Activated CD4-positive, alpha-beta T cell treated with anti-CD3 and anti-CD28 coated beads for 36 hours (primary cell): ENCODE measurements at regions of chr14 and their contacts with region 1.

Region 1: DNA sequence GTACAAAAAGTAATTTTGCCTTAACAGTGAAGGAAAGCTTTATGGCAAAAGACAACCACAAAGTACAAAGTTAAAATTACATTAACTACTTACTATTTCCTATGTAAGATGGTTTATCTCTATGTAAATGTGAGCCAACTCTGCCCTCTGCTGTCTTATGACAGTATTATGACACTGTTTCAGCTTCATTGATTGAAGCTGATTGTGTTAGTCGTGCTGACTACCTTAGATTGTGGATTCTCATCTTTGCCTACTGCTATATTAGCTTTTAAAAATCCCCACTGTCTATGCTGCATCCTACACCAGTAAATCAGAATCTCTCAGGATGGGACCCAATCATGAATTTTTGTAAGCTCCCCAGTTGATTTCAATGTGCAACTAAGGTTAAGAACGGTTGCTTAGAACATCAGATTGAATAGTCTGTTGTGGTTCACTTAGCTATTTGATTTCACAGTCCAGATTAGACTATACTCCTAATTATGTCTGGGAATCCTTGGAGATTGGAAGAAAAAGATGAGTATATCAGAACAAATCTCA is 12.2 kb upstream of the SPTB start:
- DNase-seq: peak; percentile 25
- ATAC-seq: peak; percentile 92
- H3K4me3 Mint-ChIP-seq: no peak overlapping the region
- H3K27ac Mint-ChIP-seq: no peak overlapping the region
- H3K4me1 Mint-ChIP-seq: no peaks in the 10 kb centered on the region
- H3K27me3 Mint-ChIP-seq: peaks cover 9% of the 10 kb centered on the region

Region 2: GRCh38 chr14:64671591-64671990 is 220.3 kb before region 1 on chr14:
- CTCF ChIA-PET with region 1: interaction called, 30 read pairs
- POLR2A ChIA-PET with region 1: no interaction called
- intact Hi-C with region 1: loop called (anchors 5 kb)
- DNase-seq: no peak
- ATAC-seq: peak; percentile 74
- H3K4me3 Mint-ChIP-seq: no peak overlapping the region
- H3K27ac Mint-ChIP-seq: no peak overlapping the region
- H3K4me1 Mint-ChIP-seq: peaks cover 17% of the 10 kb centered on the region
- H3K27me3 Mint-ChIP-seq: no peaks in the 10 kb centered on the region

Region 3: GRCh38 chr14:64800000-64800399 is 91.9 kb before region 1 on chr14:
- CTCF ChIA-PET with region 1: interaction called, 32 read pairs
- POLR2A ChIA-PET with region 1: no interaction called
- intact Hi-C with region 1: no loop called
- DNase-seq: peak; percentile 37
- ATAC-seq: no peak
- H3K4me3 Mint-ChIP-seq: no peak overlapping the region
- H3K27ac Mint-ChIP-seq: no peak overlapping the region
- H3K4me1 Mint-ChIP-seq: no peaks in the 10 kb centered on the region
- H3K27me3 Mint-ChIP-seq: no peaks in the 10 kb centered on the region

Region 4: DNA sequence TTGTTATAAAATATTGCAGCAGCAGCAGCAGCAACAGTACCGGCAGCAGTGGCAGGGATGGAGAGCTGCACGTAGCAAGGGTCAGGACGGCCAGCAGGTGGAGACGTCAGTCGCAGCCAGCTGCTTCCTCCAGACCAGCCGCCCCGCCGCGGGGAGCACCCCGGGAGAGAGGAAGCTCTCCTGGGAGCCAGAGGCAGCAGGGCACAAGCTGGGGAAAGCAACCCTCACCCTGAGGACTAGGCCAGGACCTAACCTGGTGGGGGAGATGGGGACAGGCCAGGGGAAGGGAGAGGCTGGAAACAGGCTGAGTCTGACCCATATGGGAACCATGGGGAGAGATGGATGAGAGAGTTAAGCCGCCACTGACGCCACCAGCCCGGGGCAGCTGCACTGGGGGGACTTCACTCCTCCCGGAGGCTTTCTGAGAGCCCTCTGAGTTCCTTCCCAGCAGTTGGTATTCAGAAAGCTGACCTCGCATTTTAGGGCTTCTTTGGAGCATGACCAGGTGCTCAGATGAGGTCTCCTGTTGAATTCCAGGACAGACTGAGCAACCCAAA is 68.5 kb before region 1 on chr14:
- CTCF ChIA-PET with region 1: interaction called, 154 read pairs
- POLR2A ChIA-PET with region 1: no interaction called
- intact Hi-C with region 1: loop called (anchors 5 kb)
- DNase-seq: peak; percentile 84
- ATAC-seq: peak; percentile 98
- H3K4me3 Mint-ChIP-seq: no peak overlapping the region
- H3K27ac Mint-ChIP-seq: no peak overlapping the region
- H3K4me1 Mint-ChIP-seq: no peaks in the 10 kb centered on the region
- H3K27me3 Mint-ChIP-seq: peaks cover 8% of the 10 kb centered on the region

Region 5: DNA sequence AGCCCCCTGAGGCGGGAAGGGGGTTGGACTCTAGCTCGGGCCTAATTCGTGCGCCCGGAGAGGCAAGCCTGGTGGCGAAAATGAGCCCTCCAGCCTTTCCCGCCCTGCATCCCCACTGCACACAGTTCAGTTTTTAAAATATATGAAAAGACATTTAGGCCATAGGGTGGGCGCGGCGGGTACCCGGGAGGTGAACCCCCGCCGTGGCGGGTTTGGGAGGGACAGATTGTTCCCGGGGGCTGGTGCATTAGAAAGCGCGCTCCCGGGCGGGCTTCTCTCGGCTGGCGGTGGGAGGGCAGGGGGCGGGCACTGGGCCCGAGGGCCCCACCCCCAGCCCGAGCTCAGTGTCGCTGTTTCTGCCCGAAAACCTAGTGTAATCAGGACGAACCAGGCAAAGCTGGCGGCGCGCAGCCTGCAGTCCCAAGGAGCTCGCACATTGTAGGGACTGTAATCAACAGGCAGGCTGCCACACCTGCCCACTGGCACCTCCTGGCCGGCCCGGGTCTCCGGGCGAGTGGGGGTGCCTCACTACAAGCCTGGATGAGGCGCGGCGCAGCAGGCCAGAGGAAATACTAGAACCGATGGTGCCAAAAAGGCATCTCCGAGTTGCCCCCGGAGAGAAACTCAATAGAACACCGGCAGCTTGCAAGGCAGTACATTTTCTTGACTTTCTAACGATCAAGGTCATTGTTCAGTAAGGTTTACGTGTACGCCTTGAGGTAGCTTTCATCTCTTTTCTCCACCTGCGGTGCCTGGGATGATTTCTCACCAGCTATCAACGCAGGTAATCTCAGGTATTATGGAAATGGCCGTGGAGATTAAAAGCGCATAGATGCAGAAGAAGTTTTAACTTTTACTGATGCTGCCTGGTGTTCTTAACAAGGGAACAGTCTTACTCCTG is 11.4 kb before region 1 on chr14:
- CTCF ChIA-PET with region 1: interaction called, 63 read pairs
- POLR2A ChIA-PET with region 1: no interaction called
- intact Hi-C with region 1: no loop called
- DNase-seq: peak; percentile 79
- ATAC-seq: peak; percentile 89
- H3K4me3 Mint-ChIP-seq: peak overlapping the region; percentile 72
- H3K27ac Mint-ChIP-seq: no peak overlapping the region
- H3K4me1 Mint-ChIP-seq: peaks cover 10% of the 10 kb centered on the region
- H3K27me3 Mint-ChIP-seq: peaks cover 25% of the 10 kb centered on the region

Region 6: DNA sequence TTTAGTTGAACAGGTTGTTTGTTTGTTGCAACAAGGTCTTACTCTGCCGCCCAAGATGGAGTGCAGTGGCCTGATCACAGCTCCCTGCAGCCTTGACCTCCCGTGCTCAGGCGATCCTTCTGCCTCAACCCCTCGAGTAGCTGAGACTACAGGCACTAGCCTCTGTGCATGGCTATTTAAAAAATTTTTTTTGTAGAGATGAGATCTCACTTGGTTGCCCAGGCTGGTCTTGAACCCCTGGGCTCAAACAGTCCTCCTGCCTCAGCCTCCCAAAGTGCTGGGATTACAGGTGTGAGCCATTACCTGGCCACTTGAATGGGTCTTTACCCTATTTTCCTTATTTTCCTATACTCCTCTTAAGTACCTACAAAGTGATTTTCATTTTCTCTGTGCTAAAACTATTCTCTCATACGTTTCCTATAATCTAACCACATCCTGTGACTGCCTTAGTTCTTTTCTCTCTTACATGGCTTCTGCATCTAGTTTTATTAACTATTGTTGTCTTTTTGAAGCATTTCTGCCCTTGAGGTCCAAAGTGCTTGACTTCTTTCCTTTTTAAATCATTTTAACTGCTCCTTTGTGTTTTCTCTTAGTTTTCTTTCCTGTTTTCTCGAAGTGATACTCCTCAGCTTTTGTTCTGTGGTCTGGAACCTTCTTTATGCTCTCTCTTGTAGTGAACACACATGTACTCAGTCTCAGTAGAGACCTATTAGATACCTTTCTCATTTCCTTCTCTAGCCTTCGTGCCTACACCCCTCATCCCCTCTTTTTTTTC is 36.5 kb after region 1 on chr14:
- CTCF ChIA-PET with region 1: interaction called, 13 read pairs
- POLR2A ChIA-PET with region 1: no interaction called
- intact Hi-C with region 1: no loop called
- DNase-seq: no peak
- ATAC-seq: peak; percentile 81
- H3K4me3 Mint-ChIP-seq: no peak overlapping the region
- H3K27ac Mint-ChIP-seq: no peak overlapping the region
- H3K4me1 Mint-ChIP-seq: peaks cover 31% of the 10 kb centered on the region
- H3K27me3 Mint-ChIP-seq: no peaks in the 10 kb centered on the region